CD8-positive, alpha-beta T cell (primary cell): ENCODE measurements at regions of chr2 and their contacts with region 1.

Region 1: DNA sequence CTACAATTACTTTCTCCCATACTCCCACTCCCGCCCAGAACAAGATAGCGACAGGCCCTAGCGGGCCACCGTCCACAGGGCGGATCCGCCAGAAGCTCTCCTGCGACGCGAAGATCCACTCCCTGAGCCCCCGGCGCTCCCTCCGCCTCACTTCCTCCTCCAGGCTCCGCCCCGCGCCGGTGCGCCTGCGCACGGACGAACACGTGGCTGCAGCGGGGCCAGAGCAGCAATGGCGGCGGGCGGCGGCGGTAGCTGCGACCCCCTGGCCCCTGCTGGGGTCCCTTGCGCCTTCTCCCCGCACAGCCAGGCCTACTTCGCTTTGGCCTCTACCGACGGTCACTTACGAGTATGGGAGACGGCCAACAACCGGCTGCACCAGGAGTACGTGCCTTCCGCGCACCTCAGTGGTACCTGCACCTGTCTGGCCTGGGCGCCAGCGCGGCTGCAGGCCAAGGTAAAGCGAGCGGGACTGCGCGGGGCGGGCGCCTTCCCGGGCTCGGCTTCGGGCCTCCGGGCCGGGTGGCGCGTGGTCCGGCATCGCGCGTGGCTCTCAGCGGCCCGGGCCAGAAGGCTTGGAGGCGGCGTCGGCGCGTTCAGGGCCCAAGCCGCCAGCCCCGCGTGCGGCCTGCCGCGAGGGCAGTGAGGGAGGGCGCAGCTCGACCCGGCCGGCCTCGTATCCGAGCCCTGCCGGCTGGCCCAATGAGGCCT is at the start of gene WDR43:
- DNase-seq: peak; percentile 94 to 99 (median 98)
- ATAC-seq: peak; percentile 98
- H3K4me3 ChIP-seq: peak within 1 kb of the TSS; percentile 81 to 89
- H3K4me3 Mint-ChIP-seq: peak within 1 kb of the TSS; percentile 96
- H3K27ac ChIP-seq: peak within 1 kb of the TSS; percentile 68 to 81
- H3K27ac Mint-ChIP-seq: peak within 1 kb of the TSS; percentile 92
- H3K4me1 ChIP-seq: peaks cover 37% of the 10 kb centered on the region
- H3K4me1 Mint-ChIP-seq: peaks cover 44% of the 10 kb centered on the region
- H3K27me3 ChIP-seq: no peaks in the 10 kb centered on the region
- H3K27me3 Mint-ChIP-seq: no peaks in the 10 kb centered on the region
- CTCF ChIP-seq: no peak
- total RNA-seq, gene WDR43: 89.2 to 90.0 TPM

Region 2: GRCh38 chr2:27071277-27071989 is 1823.2 kb before region 1 on chr2 and contains the start of gene OST4:
- CTCF ChIA-PET with region 1: no interaction called
- POLR2A ChIA-PET with region 1: no interaction called
- intact Hi-C with region 1: loop called in 1 of 2 experiments (anchors 10 kb)
- DNase-seq: peak; percentile 74 to 94 (median 88)
- ATAC-seq: peak; percentile 88
- H3K4me3 ChIP-seq: peak within 1 kb of the TSS; percentile 84 to 93
- H3K4me3 Mint-ChIP-seq: peak within 1 kb of the TSS; percentile 98
- H3K27ac ChIP-seq: peak within 1 kb of the TSS; percentile 92 to 98
- H3K27ac Mint-ChIP-seq: peak within 1 kb of the TSS; percentile 98
- H3K4me1 ChIP-seq: peaks cover 46% of the 10 kb centered on the region
- H3K4me1 Mint-ChIP-seq: peaks cover 76% of the 10 kb centered on the region
- H3K27me3 ChIP-seq: no peaks in the 10 kb centered on the region
- H3K27me3 Mint-ChIP-seq: no peaks in the 10 kb centered on the region
- CTCF ChIP-seq: no peak
- total RNA-seq, gene OST4: 252 to 260 TPM

Region 3: GRCh38 chr2:27683390-27684071 is 1211.1 kb before region 1 on chr2:
- CTCF ChIA-PET with region 1: no interaction called
- POLR2A ChIA-PET with region 1: no interaction called
- intact Hi-C with region 1: no loop called
- DNase-seq: peak; percentile 69 to 94 (median 85)
- ATAC-seq: peak; percentile 92
- H3K4me3 ChIP-seq: no peak overlapping the region
- H3K4me3 Mint-ChIP-seq: peak overlapping the region; percentile 35
- H3K27ac ChIP-seq: peak overlapping the region in 1 of 2 experiments; percentile 58
- H3K27ac Mint-ChIP-seq: peak overlapping the region; percentile 66
- H3K4me1 ChIP-seq: peaks cover 3% of the 10 kb centered on the region
- H3K4me1 Mint-ChIP-seq: peaks cover 23% of the 10 kb centered on the region
- H3K27me3 ChIP-seq: no peaks in the 10 kb centered on the region
- H3K27me3 Mint-ChIP-seq: no peaks in the 10 kb centered on the region
- CTCF ChIP-seq: peak; percentile 100

Region 4: DNA sequence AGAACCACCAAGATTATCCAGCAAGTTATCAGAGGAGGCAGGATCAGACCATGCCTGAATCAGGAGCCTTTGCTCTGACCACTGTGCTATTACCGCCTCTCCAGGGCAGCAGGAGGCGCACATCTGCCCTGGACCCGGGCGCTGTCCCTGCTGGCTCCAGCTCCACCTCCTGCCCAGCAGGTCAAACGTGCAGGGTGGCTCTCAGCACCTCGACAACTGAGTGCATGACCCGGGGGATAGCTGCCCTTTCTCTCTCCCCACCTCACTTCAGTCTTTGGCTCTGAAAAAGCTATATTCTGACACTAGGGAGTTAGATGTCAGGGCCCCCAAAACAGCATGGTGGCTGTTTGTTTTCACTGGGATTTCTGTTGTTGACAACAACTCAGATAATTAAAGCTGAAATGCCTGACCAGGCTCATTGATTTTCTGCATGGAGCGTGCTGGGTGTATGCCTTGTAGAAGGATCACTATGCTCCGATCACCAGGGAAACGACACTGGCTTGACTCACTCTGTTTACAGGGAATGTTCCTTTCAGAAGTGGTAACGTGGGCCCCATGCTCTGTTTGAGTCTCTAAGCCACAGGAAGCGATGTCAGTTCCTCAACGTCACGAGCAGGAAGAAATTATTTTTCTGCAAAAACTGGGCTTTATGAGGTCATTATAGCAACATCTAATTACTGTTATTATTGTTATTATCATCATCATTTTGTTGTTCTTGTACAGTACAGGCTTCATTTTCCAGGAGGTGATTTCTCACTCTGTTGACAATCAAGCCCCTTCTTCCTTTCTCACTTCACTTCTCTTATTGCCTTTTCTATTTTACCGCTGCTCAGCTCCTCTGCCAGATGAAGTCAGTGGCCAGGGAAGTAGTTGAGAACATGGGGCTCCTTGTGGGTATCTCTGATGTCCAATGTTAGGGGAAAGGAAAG is 273.2 kb before region 1 on chr2:
- CTCF ChIA-PET with region 1: no interaction called
- POLR2A ChIA-PET with region 1: no interaction called
- intact Hi-C with region 1: loop called in 1 of 2 experiments (anchors 5 kb)
- DNase-seq: peak; percentile 60 to 96 (median 78)
- ATAC-seq: peak; percentile 85
- H3K4me3 ChIP-seq: peak overlapping the region; percentile 19 to 33
- H3K4me3 Mint-ChIP-seq: peak overlapping the region; percentile 68
- H3K27ac ChIP-seq: peak overlapping the region; percentile 86 to 98
- H3K27ac Mint-ChIP-seq: peak overlapping the region; percentile 99
- H3K4me1 ChIP-seq: peaks cover 87% of the 10 kb centered on the region
- H3K4me1 Mint-ChIP-seq: peaks cover 92% of the 10 kb centered on the region
- H3K27me3 ChIP-seq: no peaks in the 10 kb centered on the region
- H3K27me3 Mint-ChIP-seq: no peaks in the 10 kb centered on the region
- CTCF ChIP-seq: no peak

Region 5: GRCh38 chr2:28821295-28821958 is 73.2 kb before region 1 on chr2:
- CTCF ChIA-PET with region 1: interaction called, 3 read pairs
- POLR2A ChIA-PET with region 1: interaction called, 4 read pairs
- intact Hi-C with region 1: loop called in 1 of 2 experiments (anchors 2 kb)
- DNase-seq: peak in 8 of 9 experiments; percentile 20 to 82 (median 62)
- ATAC-seq: peak; percentile 92
- H3K4me3 ChIP-seq: no peak overlapping the region
- H3K4me3 Mint-ChIP-seq: no peak overlapping the region
- H3K27ac ChIP-seq: no peak overlapping the region
- H3K27ac Mint-ChIP-seq: no peak overlapping the region
- H3K4me1 ChIP-seq: peaks cover 5% of the 10 kb centered on the region
- H3K4me1 Mint-ChIP-seq: peaks cover 4% of the 10 kb centered on the region
- H3K27me3 ChIP-seq: no peaks in the 10 kb centered on the region
- H3K27me3 Mint-ChIP-seq: no peaks in the 10 kb centered on the region
- CTCF ChIP-seq: peak; percentile 79

Region 6: DNA sequence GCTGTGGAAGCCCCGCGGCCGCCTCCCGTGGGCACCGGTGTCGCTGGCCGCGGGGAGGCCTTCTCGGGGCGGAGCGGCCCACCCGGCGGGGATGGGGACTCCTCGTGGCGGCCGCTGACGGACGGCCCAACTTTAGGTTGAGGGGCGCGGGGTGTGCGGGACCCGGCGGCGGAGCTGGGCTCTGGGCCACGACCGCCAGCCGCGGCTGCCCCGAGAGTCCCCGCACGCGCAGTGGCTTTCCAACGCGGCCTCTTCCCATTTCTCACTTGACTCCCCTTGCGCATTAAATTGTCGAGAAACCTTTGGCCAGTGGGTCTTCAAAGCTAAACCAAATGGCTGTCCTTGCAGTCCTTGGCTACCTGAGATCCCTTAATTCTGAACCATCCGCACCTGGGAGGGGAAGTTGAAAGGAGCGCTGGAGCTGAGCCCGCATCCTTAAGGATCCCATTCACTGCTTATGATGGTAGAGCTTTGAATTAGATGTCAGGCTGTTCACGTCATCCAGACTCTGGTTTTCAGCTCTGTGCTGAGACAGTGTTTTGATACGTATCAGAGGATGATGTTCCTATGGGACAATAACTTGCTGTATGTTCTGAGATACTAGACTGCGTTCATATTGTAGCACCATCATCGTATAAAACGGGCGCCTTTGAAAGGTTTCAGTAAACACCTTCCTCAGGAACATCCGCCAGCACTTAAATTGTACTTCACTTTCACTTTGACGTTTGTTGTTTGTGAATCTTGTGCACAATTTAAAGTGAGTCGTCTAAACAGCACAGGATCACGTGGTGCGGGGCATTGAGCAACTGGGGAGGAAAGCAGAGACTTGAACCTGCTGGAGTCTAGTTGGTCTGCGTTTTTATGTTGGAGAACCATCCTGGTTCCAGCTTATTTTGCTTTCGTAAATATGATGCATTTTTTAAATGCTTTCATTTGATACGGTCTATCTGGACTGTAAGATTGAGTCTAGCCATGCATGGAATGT is 221.5 kb after region 1 on chr2:
- CTCF ChIA-PET with region 1: no interaction called
- POLR2A ChIA-PET with region 1: interaction called, 5 read pairs
- intact Hi-C with region 1: loop called (anchors 1 kb)
- DNase-seq: peak; percentile 43 to 89 (median 73)
- ATAC-seq: peak; percentile 59
- H3K4me3 ChIP-seq: peak overlapping the region; percentile 80 to 82
- H3K4me3 Mint-ChIP-seq: peak overlapping the region; percentile 91
- H3K27ac ChIP-seq: peak overlapping the region; percentile 86 to 92
- H3K27ac Mint-ChIP-seq: peak overlapping the region; percentile 95
- H3K4me1 ChIP-seq: peaks cover 39% of the 10 kb centered on the region
- H3K4me1 Mint-ChIP-seq: peaks cover 54% of the 10 kb centered on the region
- H3K27me3 ChIP-seq: no peaks in the 10 kb centered on the region
- H3K27me3 Mint-ChIP-seq: no peaks in the 10 kb centered on the region
- CTCF ChIP-seq: no peak